OCI-LY7 (cell line): ENCODE measurements at regions of chrX and their contacts with region 1.

Region 1: DNA sequence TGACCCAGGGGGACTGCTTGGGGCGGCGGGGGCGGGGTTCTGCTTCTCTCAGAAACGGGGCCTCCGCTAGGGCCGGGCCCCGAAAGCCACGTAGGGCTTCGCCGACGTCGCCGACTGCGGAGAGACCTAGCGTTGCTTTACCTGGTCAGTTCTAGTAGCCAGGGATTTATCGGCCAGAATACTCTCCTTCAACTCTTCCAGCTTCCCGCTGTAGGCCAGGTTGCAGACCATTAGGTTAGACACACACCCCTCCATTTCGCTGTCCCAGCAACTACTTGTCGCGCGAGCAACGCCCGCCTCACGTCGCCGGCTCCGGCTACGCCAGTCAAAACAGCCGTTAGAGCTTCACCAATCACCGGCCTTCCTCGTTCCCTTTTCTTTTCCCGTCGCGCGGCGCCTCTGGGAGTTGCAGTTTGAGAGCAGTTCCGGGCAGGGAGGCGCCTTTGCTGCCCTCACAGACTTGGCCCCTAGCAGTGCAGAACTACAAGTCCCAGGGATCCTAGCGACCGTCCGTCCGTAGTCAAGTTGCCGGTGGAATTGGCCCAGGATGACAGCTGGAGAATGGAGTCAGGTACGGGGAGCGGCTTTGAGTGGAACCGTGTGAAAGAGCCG is at the starts of genes ATG4A and PSMD10:
- DNase-seq: peak; percentile 91
- H3K4me3 ChIP-seq: peak within 1 kb of the TSS; percentile 83
- H3K27ac ChIP-seq: peak within 1 kb of the TSS; percentile 55
- H3K4me1 ChIP-seq: peaks cover 5% of the 10 kb centered on the region
- CTCF ChIP-seq: no peak
- total RNA-seq, gene ATG4A: 5.3 and 14.7 TPM in 2 replicates
- total RNA-seq, gene PSMD10: 27.5 and 29.8 TPM in 2 replicates

Region 2: DNA sequence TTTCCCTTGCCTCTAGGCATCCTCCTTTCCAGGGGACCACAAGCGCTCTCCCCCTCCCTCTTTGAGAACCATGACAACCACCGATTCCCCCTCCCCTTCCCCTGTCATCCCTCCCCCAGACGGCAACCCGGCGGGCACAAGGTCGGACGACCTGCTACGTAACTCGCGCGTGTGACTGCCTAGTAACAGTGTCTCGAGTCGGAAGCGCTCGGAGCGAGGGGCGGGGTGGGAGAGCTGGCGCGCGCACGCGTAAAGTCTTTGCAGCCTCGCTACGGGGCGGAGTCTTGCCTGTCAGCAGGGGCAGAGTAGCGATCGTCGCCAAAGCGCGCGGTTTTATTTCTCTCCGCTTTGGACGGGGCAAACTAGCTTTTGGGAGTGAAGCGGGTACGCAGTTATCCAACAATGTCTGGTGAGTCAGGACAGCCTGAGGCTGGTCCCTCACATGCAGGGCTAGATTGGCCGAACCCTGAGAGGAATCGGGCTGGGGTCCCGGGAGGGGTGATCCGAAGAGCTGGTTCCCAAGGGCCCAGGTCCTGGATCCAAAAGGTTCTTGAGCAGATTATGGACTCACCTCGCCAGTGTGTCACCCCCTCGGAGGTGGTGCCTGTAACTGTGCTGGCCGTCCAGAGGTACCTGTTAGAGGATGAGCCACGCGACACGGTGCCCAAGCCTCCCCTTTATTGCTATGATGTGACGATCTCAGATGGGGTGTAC is 1479.5 kb before region 1 on chrX and contains the start of gene RADX:
- CTCF ChIA-PET with region 1: no interaction called
- POLR2A ChIA-PET with region 1: no interaction called
- intact Hi-C with region 1: loop called (anchors 5 kb)
- DNase-seq: peak; percentile 91
- H3K4me3 ChIP-seq: peak within 1 kb of the TSS; percentile 89
- H3K27ac ChIP-seq: peak within 1 kb of the TSS; percentile 79
- H3K4me1 ChIP-seq: peaks cover 18% of the 10 kb centered on the region
- CTCF ChIP-seq: no peak
- total RNA-seq, gene RADX: 30.8 and 34.8 TPM in 2 replicates

Region 3: GRCh38 chrX:108070891-108071290 is 20.5 kb before region 1 on chrX:
- CTCF ChIA-PET with region 1: no interaction called
- POLR2A ChIA-PET with region 1: no interaction called
- intact Hi-C with region 1: no loop called
- DNase-seq: no peak
- H3K4me3 ChIP-seq: no peak overlapping the region
- H3K27ac ChIP-seq: no peak overlapping the region
- H3K4me1 ChIP-seq: no peaks in the 10 kb centered on the region
- CTCF ChIP-seq: no peak

Region 4: GRCh38 chrX:108468486-108468885 is 377.1 kb after region 1 on chrX:
- CTCF ChIA-PET with region 1: no interaction called
- POLR2A ChIA-PET with region 1: no interaction called
- intact Hi-C with region 1: no loop called
- DNase-seq: no peak
- H3K4me3 ChIP-seq: no peak overlapping the region
- H3K27ac ChIP-seq: no peak overlapping the region
- H3K4me1 ChIP-seq: no peaks in the 10 kb centered on the region
- CTCF ChIP-seq: no peak